Posterior vena cava (tissue), 2 donors: ENCODE measurements at regions of chr10 and their contacts with region 1.

Region 1: DNA sequence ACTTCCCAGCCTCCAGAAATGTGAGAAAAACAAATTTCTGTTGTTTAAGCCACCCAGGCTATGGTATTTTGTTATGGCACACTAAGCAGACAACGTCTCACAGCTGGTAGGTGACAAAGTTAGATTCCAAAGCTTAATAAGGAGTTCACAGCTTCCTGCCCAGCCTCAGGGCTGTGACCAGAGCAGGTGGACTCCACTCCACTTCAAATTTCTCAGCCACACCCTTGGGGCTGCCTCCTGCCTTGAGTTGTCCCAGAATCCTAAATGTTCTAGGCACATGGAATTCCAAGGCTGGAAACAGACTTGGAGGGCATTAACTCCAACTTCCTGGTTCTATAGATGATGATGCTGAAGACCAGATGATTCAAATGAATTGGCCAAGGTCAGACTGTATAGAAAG is 310.7 kb downstream of the GRID1 start:
- DNase-seq: no peak

Region 2: DNA sequence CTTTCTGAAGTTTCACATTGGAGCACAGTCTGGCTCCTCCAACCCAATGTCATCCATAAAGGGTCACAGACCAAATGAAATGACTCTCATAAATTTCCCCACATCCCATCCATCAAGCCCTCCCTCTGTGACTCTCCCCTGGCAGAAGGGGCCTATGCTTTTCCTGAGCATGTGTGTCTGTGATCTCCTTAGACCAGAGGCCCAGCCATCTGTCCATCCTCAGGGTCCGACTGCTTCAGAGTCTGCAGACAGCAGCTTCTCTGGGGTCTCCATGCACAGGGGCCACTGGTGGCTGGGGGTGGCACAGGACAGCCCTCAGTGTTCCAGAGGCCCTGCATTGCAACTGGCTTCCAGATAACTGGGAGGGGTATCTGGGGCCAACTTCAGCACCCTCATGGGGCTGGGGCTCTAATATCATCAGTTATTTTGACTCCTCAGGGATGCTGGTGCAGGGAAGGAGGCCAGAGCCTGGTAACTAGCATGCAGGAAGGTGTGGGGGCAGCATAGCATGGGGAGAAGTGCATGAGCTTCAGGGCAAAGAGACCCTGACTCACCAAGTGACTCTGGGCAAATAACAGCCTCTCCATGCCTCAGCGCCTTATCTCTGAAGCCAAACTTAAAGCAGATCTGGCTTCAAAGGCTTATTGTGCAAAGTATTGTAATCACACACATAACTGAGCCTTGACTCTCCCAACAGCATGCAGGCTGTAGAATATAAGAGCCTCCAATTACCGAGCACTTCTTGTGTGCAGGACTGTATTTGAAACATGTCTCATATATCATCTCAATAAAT is 43.8 kb after region 1 on chr10:
- intact Hi-C with region 1: loop called in 1 of 2 experiments (anchors 1 kb)
- DNase-seq: peak; percentile 64